Activated T-helper 1 cell treated with anti-CD3 and anti-CD28 coated beads, Interleukin-12 subunit alpha, Interleukin-12 subunit beta, Interleukin-2, Interleukin-4 antibody, amounts not matched to agents 30 ng/mL and 10 ng/mL and 1 ng/mL, durations not matched to agents 14 hours and 24 hours and 36 hours (primary cell): ENCODE measurements at regions of chr6 and their contacts with region 1.

Region 1: DNA sequence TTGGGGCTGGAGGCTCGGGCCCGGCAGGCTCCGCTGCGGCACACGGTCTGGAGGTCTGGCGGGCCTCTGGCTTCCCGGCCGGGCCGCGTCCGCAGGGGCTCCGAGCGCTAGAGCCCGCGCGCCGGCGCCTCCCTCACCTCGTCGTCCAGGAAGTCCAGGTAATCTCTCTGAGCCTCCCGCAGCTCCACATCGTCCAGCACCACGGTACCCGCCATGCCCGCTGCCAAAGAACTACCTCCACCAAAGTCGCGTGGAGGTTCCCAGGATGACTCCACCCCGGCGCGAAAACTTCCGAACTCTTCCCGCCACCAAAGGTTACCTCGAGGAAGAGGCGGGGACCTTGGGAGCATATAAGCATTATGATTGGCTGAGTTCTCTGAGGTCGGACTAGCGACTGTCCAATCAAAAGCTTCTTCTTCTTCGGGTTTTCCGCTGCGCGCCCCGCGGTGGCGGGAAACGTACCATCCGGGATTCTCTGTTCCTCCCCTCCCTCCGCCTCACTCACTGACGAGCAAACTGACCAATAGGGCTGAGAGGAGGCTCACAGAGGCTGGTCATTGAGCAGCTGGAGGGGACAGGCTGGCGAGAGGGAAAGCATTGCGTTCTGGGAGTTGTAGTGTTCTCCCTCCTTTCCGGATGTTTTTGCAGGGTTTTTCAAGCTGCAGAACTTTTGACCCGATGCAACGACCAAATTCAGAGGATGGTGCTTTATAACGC is at the start of gene MCM3:
- DNase-seq: peak; percentile 97
- H3K4me3 Mint-ChIP-seq: no peak within 1 kb of the TSS
- H3K27ac Mint-ChIP-seq: peak within 1 kb of the TSS; percentile 76
- H3K4me1 Mint-ChIP-seq: peaks cover 50% of the 10 kb centered on the region
- H3K27me3 Mint-ChIP-seq: no peaks in the 10 kb centered on the region
- total RNA-seq, gene MCM3: 212 and 214 TPM in 2 replicates

Region 2: GRCh38 chr6:52227495-52227894 is 57.1 kb before region 1 on chr6:
- intact Hi-C with region 1: loop called (anchors 2 kb)
- DNase-seq: peak; percentile 72
- H3K4me3 Mint-ChIP-seq: peak overlapping the region; percentile 2
- H3K27ac Mint-ChIP-seq: peak overlapping the region; percentile 58
- H3K4me1 Mint-ChIP-seq: peaks cover 51% of the 10 kb centered on the region
- H3K27me3 Mint-ChIP-seq: peaks cover 55% of the 10 kb centered on the region

Region 3: GRCh38 chr6:52304983-52305390 is 20.4 kb after region 1 on chr6:
- intact Hi-C with region 1: loop called (anchors 1 kb)
- DNase-seq: no peak
- H3K4me3 Mint-ChIP-seq: peak overlapping the region; percentile 10
- H3K27ac Mint-ChIP-seq: peak overlapping the region; percentile 45
- H3K4me1 Mint-ChIP-seq: peaks cover 50% of the 10 kb centered on the region
- H3K27me3 Mint-ChIP-seq: no peaks in the 10 kb centered on the region

Region 4: DNA sequence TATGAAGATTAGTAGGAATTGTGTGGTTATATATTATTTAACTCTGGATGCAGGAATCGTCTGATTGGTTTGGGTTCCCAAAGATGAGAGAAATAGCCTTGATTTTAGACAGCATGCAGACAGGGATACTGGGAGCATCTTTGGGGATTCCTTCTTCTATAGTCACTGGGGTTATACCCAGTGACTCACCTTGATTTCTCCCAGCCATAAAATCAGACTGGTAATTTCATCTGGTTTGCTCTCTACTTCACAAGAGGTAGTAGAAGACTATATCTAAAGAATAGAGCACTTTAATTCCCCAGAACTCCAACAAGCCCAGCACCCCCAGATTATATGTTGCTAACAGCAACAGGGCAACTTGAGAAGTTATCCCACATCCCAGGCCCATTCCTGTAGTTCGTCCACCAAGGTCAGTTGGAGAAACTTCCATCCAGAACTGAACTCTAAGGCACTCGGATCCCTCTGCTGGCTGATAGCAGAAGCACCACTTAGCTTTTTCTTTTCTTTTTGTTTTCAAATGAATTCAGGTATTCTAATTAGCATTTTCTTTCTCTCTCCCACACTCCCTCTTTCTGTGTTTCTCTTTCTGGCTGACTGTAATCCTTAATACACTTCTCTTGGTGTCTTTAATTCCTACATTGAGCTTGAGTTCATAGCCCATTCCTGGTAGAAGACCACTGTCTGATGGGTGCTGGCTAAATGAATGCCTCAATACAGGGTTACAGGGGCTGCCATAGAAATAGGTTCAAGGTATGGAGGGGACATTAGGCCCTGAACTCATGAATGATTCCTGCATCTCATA is 115.1 kb after region 1 on chr6:
- intact Hi-C with region 1: loop called (anchors 1 kb)
- DNase-seq: no peak
- H3K4me3 Mint-ChIP-seq: peak overlapping the region; percentile 42
- H3K27ac Mint-ChIP-seq: peak overlapping the region; percentile 38
- H3K4me1 Mint-ChIP-seq: peaks cover 52% of the 10 kb centered on the region
- H3K27me3 Mint-ChIP-seq: peaks cover 5% of the 10 kb centered on the region

Region 5: DNA sequence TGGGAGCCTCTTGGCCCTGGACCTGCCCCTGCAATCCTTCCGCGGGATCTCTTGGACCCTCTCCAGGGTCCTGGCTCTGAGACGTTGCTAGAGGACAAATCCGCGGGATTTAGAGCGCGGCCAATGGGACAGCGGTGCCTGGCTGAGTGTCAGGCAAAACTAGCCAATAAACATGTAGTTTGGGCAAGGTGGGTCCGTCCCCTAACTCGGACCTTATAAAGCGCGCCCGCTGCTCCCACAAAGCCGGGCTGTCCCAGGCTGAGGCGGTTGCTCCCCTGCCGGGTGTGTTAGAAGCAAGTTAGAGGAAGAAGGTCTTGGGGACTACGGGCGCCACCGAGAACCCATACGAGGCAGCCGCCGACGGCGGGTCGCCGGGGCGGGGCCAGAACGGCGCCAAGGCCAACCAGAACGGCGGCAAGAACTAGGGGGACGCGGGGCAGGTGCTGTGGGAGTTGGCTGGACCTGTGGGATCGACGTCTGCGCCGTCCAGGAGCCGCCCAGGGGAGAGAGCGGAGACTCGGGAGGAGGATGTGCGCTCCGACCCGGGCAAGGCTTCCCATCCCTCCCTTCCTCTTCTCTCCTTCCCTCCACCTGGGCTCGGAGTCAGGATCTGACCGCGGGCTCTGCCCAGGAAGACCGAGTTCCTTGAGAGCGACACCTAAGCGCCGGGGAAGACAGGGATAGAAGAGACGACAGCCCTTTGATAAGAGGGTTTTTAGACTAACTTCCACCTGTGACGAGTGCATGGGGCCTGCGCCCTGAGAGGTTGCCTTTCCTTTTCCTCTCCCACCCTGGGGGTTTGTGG is 379.8 kb after region 1 on chr6:
- intact Hi-C with region 1: loop called (anchors 1 kb)
- DNase-seq: peak; percentile 68
- H3K4me3 Mint-ChIP-seq: no peak overlapping the region
- H3K27ac Mint-ChIP-seq: no peak overlapping the region
- H3K4me1 Mint-ChIP-seq: peaks cover 10% of the 10 kb centered on the region
- H3K27me3 Mint-ChIP-seq: no peaks in the 10 kb centered on the region

Region 6: DNA sequence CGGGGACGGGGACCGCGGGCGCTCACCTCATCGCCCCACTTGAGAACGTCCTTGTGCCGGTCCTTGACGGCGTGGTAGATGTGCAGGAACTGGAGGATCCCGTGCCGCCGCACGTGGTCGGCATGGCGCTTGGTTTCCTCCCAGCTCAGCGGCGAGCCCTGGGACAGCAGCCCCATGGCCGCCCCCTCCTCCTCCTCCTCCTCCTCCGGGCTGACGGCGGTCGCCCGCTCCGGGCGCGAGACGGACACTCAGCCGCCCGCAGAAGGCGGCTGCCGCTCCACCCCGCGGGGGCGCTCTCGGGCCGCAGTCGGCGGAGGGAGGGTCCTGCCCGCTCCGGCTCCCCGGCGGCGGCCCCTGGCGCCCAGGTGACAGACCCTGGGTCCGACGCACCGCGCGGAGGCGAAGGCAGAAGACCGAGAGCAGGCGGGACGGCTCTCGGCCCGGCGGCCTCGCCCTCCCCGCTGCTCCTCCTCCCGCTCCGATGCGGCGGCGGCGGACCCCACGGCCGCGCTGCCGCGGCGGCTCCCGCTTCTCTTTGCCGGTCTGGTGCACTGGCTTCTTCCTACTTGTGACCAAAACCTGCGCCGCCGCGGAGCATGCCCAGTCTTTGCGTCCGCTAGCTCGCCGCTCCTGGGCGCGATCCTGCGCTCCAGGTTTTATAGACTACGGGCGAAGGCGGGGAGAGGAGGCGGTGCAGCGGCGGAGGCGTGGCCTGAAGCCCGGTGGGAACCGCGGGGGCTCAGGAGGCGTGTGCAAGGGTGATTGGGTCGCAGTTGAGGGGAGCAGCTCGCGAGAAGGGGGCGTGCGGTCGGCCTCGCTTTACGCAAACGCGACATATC is 1260.1 kb after region 1 on chr6 and contains the start of gene GCLC:
- intact Hi-C with region 1: loop called (anchors 10 kb)
- DNase-seq: peak; percentile 84
- H3K4me3 Mint-ChIP-seq: peak within 1 kb of the TSS; percentile 96
- H3K27ac Mint-ChIP-seq: peak within 1 kb of the TSS; percentile 96
- H3K4me1 Mint-ChIP-seq: peaks cover 49% of the 10 kb centered on the region
- H3K27me3 Mint-ChIP-seq: peaks cover 10% of the 10 kb centered on the region
- total RNA-seq, gene GCLC: 26.1 and 28.9 TPM in 2 replicates